ENCODE measurements at regions of chr14 and their contacts with region 1.

Region 1: DNA sequence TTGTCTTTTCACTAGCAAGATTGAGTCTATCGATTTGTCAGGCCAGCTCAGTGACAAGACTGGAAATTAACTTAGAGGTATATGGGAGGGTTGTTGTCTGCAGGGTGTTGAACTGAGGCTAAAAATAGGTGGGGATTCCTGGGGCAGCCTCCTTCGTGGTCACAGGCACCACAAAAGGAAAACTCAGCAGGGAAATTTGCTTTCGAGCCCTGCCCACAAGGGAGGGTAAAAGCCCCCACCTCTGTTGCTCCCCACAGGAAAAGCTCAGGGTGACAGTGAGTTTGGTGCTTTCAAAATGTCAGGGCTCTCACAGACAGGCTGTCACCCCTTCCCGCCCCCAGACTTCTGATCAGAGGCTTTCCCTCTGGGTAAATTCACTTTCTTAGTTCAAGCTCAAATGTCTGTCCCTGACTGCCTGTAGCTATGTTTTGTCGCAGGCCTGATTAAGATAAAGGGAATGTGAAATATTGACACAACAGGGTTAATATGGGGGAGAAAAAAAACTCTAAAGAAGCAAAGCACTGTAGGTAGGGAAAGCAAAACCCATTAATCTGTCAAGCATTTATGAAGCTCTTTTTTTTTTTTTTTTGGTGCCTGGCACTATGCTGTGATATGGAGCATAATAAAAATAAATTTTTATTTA is 11.7 kb upstream of the NFKBIA start:
- DNase-seq: peak in 10 of 14 experiments; percentile 18 to 92 (median 50)
- ATAC-seq: peak; percentile 49
- H3K4me3 ChIP-seq: no peak overlapping the region
- H3K4me3 Mint-ChIP-seq: no peak overlapping the region
- H3K27ac ChIP-seq: peak overlapping the region; percentile 47 to 54
- H3K27ac Mint-ChIP-seq: peak overlapping the region; percentile 70
- H3K4me1 ChIP-seq: peaks cover 44% of the 10 kb centered on the region
- H3K4me1 Mint-ChIP-seq: peaks cover 43% of the 10 kb centered on the region
- H3K27me3 ChIP-seq: no peaks in the 10 kb centered on the region
- H3K27me3 Mint-ChIP-seq: no peaks in the 10 kb centered on the region
- CTCF ChIP-seq: no peak

Region 2: GRCh38 chr14:34671716-34672115 is 744.5 kb before region 1 on chr14:
- CTCF ChIA-PET with region 1: no interaction called
- POLR2A ChIA-PET with region 1: no interaction called
- intact Hi-C with region 1: loop called in 1 of 2 experiments (anchors 2 kb)
- DNase-seq: no peak
- ATAC-seq: no peak
- H3K4me3 ChIP-seq: no peak overlapping the region
- H3K4me3 Mint-ChIP-seq: no peak overlapping the region
- H3K27ac ChIP-seq: no peak overlapping the region
- H3K27ac Mint-ChIP-seq: no peak overlapping the region
- H3K4me1 ChIP-seq: peaks cover 5% of the 10 kb centered on the region
- H3K4me1 Mint-ChIP-seq: no peaks in the 10 kb centered on the region
- H3K27me3 ChIP-seq: no peaks in the 10 kb centered on the region
- H3K27me3 Mint-ChIP-seq: no peaks in the 10 kb centered on the region
- CTCF ChIP-seq: no peak

Region 3: GRCh38 chr14:35140718-35141581 is 275.3 kb before region 1 on chr14:
- CTCF ChIA-PET with region 1: interaction called, 9 read pairs
- POLR2A ChIA-PET with region 1: interaction called, 9 read pairs
- intact Hi-C with region 1: loop called (anchors 1 to 2 kb)
- DNase-seq: peak in 2 of 14 experiments; percentile 33 to 55
- ATAC-seq: peak; percentile 49
- H3K4me3 ChIP-seq: no peak overlapping the region
- H3K4me3 Mint-ChIP-seq: no peak overlapping the region
- H3K27ac ChIP-seq: no peak overlapping the region
- H3K27ac Mint-ChIP-seq: peak overlapping the region; percentile 80
- H3K4me1 ChIP-seq: no peaks in the 10 kb centered on the region
- H3K4me1 Mint-ChIP-seq: peaks cover 28% of the 10 kb centered on the region
- H3K27me3 ChIP-seq: no peaks in the 10 kb centered on the region
- H3K27me3 Mint-ChIP-seq: no peaks in the 10 kb centered on the region
- CTCF ChIP-seq: peak; percentile 73

Region 4: GRCh38 chr14:35292051-35292769 is 124.0 kb before region 1 on chr14 and contains the start of gene PSMA6:
- CTCF ChIA-PET with region 1: no interaction called
- POLR2A ChIA-PET with region 1: interaction called, 17 read pairs
- intact Hi-C with region 1: no loop called
- DNase-seq: peak; percentile 97 to 100 (median 99)
- ATAC-seq: peak; percentile 96
- H3K4me3 ChIP-seq: peak within 1 kb of the TSS; percentile 78
- H3K4me3 Mint-ChIP-seq: peak within 1 kb of the TSS; percentile 98
- H3K27ac ChIP-seq: peak within 1 kb of the TSS; percentile 80 to 86
- H3K27ac Mint-ChIP-seq: peak within 1 kb of the TSS; percentile 95
- H3K4me1 ChIP-seq: peaks cover 38% of the 10 kb centered on the region
- H3K4me1 Mint-ChIP-seq: peaks cover 50% of the 10 kb centered on the region
- H3K27me3 ChIP-seq: no peaks in the 10 kb centered on the region
- H3K27me3 Mint-ChIP-seq: no peaks in the 10 kb centered on the region
- CTCF ChIP-seq: no peak
- total RNA-seq, gene PSMA6: 80.8 TPM